Heart right ventricle (tissue), 16 donors: ENCODE measurements at regions of chr7 and their contacts with region 1.

Region 1: DNA sequence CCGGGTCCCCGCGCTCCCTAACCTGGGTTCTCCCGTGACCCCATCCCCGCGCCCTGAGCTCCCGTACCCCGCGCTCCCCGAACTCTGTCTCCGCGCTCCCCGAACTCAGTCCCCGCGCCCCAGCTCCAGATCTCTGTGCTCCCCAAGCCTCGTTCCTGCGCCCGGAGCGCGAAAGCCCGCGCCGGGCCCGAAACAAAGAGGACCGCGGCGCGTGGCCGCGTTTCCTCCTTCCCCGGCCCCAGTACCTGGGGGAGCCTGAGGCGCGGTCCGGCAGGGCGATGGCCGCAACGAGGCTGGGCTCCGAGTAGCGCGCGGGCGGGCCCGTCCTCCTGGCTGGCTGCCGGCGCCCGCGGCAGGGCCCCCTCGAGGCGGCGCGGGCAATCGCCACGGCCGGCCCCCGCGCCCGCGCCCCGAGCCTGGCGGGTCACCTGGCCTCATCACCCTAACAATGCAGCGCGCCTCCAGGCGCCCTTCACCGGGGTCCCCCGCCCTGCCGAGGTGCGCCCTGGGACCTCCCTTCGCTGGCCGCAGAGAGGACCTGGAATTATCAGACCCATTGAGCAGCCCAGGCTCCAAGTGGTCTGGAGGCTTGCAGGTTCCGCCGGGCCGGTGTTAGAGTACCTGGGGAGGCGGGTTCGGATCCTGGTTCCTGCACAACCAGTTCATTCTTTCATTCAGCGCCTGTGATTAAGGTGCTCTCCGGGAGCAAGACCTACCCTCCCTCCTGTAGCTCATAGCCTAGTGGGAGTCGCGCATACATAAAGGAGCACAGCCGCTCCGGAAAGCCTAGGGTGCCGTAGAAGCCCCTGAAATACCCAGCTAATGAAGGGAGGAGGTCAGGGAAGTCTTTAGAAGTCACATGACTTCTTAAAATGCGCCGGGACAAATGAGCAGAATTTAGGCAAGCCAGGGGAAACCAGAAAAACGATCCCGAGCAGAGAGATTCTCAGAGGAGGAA is at the start of gene TNS3:
- DNase-seq: peak in 1 of 2 donors; percentile 60
- ATAC-seq: peak; percentile 43 to 72 (median 57)
- H3K4me3 ChIP-seq: peak within 1 kb of the TSS; percentile 62 to 89 (median 73)
- H3K27ac ChIP-seq: peak within 1 kb of the TSS in 9 of 10 donors; percentile 23 to 92 (median 72)
- H3K4me1 ChIP-seq: peaks cover 0 to 77% (median 50%) of the 10 kb centered on the region in 9 donors
- H3K27me3 ChIP-seq: peaks cover 0 to 8% (median 0%) of the 10 kb centered on the region in 7 donors
- CTCF ChIP-seq: peak in 7 of 9 donors; percentile 5 to 43 (median 22)
- total RNA-seq, gene TNS3: 29.9 to 74.2 (median 35.6) TPM

Region 2: DNA sequence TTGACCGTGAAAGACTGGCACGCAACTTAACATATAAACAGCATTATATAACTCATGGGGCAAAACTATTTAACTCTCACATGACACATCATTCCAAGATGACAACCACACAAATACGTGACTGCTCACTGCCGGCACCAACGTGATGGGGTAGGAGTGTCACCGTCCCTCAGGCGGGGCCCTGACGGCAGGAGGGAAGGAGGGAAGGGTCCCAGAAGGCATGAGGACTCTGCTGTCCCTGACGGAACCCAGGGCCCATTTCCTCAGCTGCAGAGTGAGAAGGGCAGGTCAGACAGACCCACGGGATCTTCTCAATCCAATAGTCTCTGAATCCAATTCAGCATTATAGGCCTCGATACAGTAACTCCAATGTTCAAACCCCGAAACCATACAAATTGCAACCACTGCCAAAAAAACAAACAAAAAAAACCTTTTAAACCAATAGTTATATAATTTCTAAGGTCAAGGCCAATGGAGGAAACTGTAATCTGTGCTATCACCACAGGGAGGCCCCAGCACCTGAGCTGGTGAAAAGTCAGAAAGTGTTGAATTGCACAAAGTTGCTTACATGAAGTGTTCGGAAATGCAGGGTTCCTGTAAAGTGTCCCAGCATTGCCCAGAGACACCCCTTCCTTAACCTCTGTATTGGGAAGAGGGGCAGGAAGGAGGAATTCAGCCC is 137.6 kb before region 1 on chr7:
- intact Hi-C with region 1: loop called in 3 of 10 experiments (anchors 5 to 10 kb)
- DNase-seq: no peak
- ATAC-seq: peak in 2 of 8 donors; percentile 16 to 40
- H3K4me3 ChIP-seq: no peak overlapping the region
- H3K27ac ChIP-seq: no peak overlapping the region
- H3K4me1 ChIP-seq: peaks cover 4 to 48% (median 23%) of the 10 kb centered on the region in 9 donors
- H3K27me3 ChIP-seq: no peaks in the 10 kb centered on the region
- CTCF ChIP-seq: peak; percentile 13 to 66 (median 50)

Region 3: DNA sequence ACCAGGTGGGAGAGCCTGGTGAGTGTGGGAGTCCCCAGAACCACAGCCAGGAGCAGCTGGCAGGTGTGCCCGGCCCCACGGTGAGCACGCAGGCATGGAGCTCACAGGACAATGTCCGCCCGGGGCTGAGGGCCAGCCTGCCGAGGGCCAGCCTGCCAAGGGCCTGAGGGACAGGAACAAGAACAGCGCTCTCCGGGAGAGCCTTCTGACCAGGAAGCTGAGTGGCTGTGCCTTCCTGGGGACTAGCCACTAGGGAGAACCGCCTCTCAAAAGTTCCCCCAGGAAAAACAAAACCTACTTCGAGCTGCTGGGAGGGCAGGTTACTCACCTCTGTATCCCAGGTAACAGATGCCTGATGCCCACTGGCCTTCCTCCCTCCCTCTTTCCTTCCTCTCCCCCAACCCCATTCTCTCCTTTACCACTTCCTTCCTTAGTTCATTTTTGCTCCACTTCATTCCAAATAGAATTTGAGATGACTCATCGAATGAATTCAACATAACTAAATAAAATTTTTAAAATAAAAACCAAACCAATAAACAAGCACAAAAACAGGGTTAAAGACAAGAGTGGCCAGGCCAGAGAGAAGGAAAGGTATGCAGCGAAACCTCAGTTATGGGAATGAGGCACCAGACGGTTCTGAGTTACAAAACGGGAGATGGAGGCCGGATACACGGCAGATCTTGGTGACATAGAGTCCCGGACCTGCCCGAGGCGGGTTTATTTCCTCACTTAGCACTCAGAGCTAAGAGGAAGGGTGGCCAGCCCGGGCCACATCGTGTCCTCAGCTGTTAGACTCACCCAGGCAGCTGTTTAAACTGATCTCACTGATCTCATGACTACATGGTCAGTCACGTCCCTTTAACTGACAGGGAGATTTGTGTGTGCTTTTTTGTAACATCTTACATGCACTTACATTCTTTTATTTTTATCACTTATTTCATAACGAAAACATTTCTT is 128.7 kb before region 1 on chr7:
- intact Hi-C with region 1: loop called in 4 of 10 experiments (anchors 5 to 10 kb)
- DNase-seq: peak; percentile 43 to 58
- ATAC-seq: peak; percentile 62 to 84 (median 76)
- H3K4me3 ChIP-seq: peak overlapping the region in 9 of 10 donors; percentile 1 to 44 (median 38)
- H3K27ac ChIP-seq: peak overlapping the region; percentile 36 to 90 (median 84)
- H3K4me1 ChIP-seq: peaks cover 14 to 62% (median 37%) of the 10 kb centered on the region in 9 donors
- H3K27me3 ChIP-seq: no peaks in the 10 kb centered on the region
- CTCF ChIP-seq: no peak

Region 4: GRCh38 chr7:47536661-47537611 is 45.1 kb before region 1 on chr7:
- intact Hi-C with region 1: loop called in 1 of 10 experiments (anchors 2 kb)
- DNase-seq: peak; percentile 36 to 61
- ATAC-seq: peak; percentile 54 to 76 (median 65)
- H3K4me3 ChIP-seq: peak overlapping the region; percentile 46 to 63 (median 56)
- H3K27ac ChIP-seq: peak overlapping the region in 4 of 10 donors; percentile 33 to 58 (median 43)
- H3K4me1 ChIP-seq: peaks cover 2 to 60% (median 9%) of the 10 kb centered on the region in 9 donors
- H3K27me3 ChIP-seq: peaks cover 0 to 17% (median 0%) of the 10 kb centered on the region in 7 donors
- CTCF ChIP-seq: no peak

Region 5: DNA sequence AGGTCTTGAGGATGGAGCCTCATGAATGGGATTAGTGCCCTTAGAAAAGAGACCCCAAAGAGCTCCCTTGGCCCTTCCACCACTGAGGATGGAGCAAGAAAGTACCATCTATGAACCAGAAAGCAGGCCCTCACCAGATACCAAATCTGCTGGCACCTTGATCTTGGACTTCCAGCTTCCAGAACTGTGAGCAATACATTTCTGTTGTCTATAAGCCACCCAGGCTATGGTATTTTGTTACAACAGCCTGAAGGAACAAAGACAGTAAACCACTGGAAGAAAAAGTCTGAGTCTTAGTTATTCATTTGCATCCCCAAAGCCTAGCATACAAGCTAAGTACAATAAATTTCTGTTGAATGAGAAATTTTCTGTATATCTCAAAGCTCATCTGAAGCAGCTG is 37.7 kb after region 1 on chr7:
- intact Hi-C with region 1: loop called in 1 of 10 experiments (anchors 1 kb)
- DNase-seq: no peak
- ATAC-seq: no peak
- H3K4me3 ChIP-seq: no peak overlapping the region
- H3K27ac ChIP-seq: no peak overlapping the region
- H3K4me1 ChIP-seq: peaks cover 0 to 33% (median 19%) of the 10 kb centered on the region in 9 donors
- H3K27me3 ChIP-seq: no peaks in the 10 kb centered on the region
- CTCF ChIP-seq: no peak

Region 6: DNA sequence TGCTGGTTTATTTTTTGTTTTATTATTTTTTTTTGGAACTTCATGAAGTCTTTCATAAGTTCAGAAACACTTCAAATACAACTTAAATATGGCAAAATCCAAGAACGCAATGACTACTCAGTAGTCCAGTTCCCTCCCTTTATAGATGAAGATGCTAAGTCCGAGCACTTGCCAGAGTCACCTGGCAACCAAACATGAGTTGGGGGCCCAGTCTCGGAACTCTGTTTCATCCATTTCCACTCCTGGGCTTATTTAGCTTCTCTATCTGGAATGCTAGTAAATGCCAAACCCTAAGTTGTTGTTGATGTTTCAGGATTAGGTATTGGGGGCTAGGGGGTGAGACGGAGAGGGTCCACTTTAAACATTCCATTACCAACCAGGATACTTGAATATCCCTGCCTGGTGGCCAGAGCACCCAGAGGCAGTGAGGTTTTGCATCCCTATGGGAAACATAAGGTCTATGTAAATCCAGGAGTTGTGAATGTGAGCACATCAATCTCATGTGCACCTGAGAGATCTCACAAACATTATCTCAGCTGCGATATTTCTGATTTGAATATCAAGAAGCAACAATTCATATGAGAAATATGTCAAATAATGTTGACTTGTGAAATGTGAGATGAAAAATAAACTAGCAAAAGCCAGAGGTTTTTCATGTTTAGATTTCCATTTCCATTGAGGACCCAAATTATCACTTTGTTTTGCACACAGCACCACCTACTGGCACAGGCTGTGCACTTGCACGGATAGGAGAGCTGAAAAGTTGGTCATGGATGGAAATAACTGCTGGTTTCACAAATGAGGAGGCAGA is 236.9 kb after region 1 on chr7:
- intact Hi-C with region 1: loop called in 3 of 10 experiments (anchors 10 kb)
- DNase-seq: peak; percentile 54 to 62
- ATAC-seq: peak in 6 of 8 donors; percentile 65 to 81 (median 71)
- H3K4me3 ChIP-seq: no peak overlapping the region
- H3K27ac ChIP-seq: no peak overlapping the region
- H3K4me1 ChIP-seq: peaks cover 0 to 20% (median 14%) of the 10 kb centered on the region in 9 donors
- H3K27me3 ChIP-seq: no peaks in the 10 kb centered on the region
- CTCF ChIP-seq: peak; percentile 71 to 99 (median 93)